ENCODE measurements at regions of chr11 and their contacts with region 1.

Region 1: DNA sequence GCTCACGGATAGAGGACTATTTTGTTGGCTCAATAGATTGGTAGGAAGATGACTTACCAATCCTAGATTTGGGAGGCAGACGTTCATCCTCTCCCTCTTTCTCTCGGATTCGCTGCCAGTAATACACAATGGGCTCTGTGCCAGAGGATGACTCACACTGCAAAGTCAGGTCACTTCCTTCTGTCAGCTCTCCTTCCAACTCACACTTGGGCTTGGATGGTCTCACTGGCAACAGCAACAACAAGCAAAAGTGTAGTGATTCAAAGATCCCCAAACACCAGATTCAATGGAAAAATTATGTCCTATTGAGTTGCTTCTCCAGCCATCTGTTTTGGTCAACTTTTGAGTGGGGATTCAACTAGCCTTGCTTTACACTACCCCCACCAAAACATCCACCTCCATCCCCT is 21.7 kb upstream of the HSPA8 start:
- DNase-seq: peak; percentile 97
- H3K4me3 Mint-ChIP-seq: no peak overlapping the region
- H3K27ac Mint-ChIP-seq: peak overlapping the region; percentile 94
- H3K4me1 Mint-ChIP-seq: peaks cover 9% of the 10 kb centered on the region
- H3K27me3 Mint-ChIP-seq: no peaks in the 10 kb centered on the region
- CTCF ChIP-seq: no peak

Region 2: GRCh38 chr11:123062158-123062891 is 21.3 kb before region 1 on chr11:
- CTCF ChIA-PET with region 1: no interaction called
- POLR2A ChIA-PET with region 1: interaction called, 25 read pairs
- intact Hi-C with region 1: no loop called
- DNase-seq: peak; percentile 99
- H3K4me3 Mint-ChIP-seq: peak overlapping the region; percentile 97
- H3K27ac Mint-ChIP-seq: peak overlapping the region; percentile 99
- H3K4me1 Mint-ChIP-seq: peaks cover 46% of the 10 kb centered on the region
- H3K27me3 Mint-ChIP-seq: no peaks in the 10 kb centered on the region
- CTCF ChIP-seq: no peak

Measured in MCF 10A (cell line).